ENCODE measurements at regions of chr9 and their contacts with region 1.

Region 1: DNA sequence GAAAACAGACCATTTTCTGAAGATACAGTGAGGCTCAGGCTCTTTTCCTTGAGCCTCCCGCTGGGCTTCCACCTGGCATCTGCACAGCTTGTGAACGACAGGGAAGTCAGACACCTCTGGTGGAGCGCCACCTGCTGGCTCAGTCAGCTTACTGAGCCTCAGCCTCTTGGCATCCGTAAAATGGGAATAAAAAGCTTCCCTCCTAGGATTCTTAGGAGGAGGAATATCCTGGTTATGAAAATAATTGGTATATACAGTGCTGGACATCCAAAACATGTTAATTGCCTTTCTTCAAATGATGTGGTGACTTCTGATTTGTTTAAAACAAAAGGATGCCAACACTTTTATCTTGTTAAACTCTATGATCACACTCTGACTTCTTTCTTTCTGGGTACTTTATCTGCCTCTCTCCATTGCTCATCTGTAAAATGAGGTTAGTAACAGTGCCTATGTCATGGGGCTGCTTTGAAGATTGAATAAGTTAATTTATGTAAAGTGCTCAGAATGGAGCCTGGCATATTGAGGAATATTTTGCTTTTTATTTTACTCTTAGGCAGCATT is 67.5 kb downstream of the MAMDC2 start:
- DNase-seq: peak; percentile 81
- H3K4me3 ChIP-seq: no peak overlapping the region
- H3K27ac ChIP-seq: peak overlapping the region; percentile 9 to 72 (median 51)
- H3K4me1 ChIP-seq: peaks cover 0 to 24% (median 6%) of the 10 kb centered on the region in 4 donors
- H3K27me3 ChIP-seq: no peaks in the 10 kb centered on the region
- CTCF ChIP-seq: peak; percentile 68 to 91 (median 82)
- EP300 ChIP-seq: no peak
- POLR2A ChIP-seq: no peak

Region 2: DNA sequence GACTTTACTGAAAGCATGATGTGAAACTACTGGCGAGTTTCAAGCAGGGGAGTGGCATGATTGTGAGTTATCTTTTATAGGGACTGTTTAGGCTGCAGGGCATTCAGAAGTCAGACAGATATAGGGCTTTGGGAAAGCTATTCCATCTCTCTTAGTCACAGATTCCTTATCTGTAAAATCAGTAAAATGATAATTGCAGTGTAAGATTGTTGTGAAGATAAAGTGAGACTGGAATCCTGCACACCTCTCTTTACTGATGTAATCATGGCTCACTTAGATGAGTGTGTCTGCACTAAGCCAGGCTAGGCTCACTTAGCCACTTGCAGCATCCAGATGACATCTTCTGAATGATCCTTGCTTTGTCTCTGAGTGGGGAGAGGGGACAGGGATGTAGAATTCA is 149.3 kb before region 1 on chr9:
- in situ Hi-C with region 1: loop called (anchors 5 to 10 kb)
- intact Hi-C with region 1: no loop called
- DNase-seq: no peak
- H3K4me3 ChIP-seq: no peak overlapping the region
- H3K27ac ChIP-seq: no peak overlapping the region
- H3K4me1 ChIP-seq: no peaks in the 10 kb centered on the region
- H3K27me3 ChIP-seq: no peaks in the 10 kb centered on the region
- CTCF ChIP-seq: no peak
- EP300 ChIP-seq: no peak
- POLR2A ChIP-seq: no peak

Region 3: DNA sequence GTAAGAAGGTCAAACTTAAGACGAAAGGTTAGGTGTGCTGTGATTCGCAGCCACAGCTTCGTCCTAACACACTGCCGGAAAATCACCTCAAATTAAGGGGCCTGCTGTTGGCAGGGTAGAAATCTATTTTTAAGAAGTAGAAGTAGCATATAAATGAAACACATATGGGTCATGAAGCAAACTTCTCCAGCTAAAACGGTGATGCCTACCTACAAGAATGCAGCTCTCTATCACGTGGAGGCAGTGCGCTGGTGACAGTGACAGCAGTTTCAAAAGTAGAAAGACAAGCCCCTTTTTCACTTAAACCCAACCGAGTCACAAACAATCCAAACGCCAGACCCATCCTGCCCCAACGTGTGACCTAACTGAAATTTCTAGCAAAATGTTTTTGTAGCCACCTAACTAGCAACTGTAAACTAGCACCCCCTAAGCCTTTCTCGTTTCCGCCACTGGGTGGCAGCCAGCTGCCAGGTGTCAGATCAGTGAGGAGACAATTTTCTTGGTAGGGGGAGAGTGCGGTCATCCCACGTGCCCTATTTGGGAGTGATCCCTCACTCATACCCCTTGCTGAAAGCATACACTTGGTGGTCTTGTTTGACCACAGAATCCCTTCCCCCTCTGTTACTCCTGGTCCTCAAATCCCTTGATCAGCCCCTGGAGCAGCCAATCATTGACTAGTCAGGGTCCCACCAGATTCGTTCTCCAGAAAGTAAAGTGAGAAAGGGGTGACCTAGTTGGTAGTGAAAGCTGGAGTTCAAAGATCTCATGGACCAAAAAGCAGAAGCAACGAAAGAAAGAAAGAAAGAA is 139.3 kb before region 1 on chr9:
- in situ Hi-C with region 1: loop called (anchors 5 to 10 kb)
- intact Hi-C with region 1: loop called (anchors 2 kb)
- DNase-seq: peak; percentile 67
- H3K4me3 ChIP-seq: no peak overlapping the region
- H3K27ac ChIP-seq: no peak overlapping the region
- H3K4me1 ChIP-seq: no peaks in the 10 kb centered on the region
- H3K27me3 ChIP-seq: no peaks in the 10 kb centered on the region
- CTCF ChIP-seq: peak; percentile 73 to 90 (median 82)
- EP300 ChIP-seq: no peak
- POLR2A ChIP-seq: no peak

Region 4: DNA sequence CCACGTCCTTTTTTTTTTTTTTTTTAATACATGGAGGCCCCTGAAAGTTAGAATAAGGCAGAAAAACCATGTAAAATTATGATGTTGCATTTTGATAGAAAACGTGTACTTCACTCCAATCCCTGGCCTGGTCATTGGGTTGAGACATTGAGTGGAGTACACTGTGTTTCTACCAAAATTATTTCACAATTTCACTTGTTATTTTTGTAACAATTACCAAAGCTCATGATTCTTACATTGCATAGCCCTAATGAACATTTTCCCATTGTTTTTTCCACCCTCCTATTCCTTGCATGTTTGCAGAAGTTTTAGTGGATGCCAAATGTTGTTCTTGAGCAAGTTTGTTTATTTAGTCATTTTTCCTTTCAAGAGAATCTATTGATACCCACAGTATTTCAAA is 45.5 kb before region 1 on chr9:
- in situ Hi-C with region 1: no loop called
- intact Hi-C with region 1: no loop called
- DNase-seq: no peak
- H3K4me3 ChIP-seq: no peak overlapping the region
- H3K27ac ChIP-seq: peak overlapping the region; percentile 77 to 90 (median 83)
- H3K4me1 ChIP-seq: peaks cover 5 to 48% (median 14%) of the 10 kb centered on the region in 4 donors
- H3K27me3 ChIP-seq: no peaks in the 10 kb centered on the region
- CTCF ChIP-seq: no peak
- EP300 ChIP-seq: no peak
- POLR2A ChIP-seq: no peak

Region 5: DNA sequence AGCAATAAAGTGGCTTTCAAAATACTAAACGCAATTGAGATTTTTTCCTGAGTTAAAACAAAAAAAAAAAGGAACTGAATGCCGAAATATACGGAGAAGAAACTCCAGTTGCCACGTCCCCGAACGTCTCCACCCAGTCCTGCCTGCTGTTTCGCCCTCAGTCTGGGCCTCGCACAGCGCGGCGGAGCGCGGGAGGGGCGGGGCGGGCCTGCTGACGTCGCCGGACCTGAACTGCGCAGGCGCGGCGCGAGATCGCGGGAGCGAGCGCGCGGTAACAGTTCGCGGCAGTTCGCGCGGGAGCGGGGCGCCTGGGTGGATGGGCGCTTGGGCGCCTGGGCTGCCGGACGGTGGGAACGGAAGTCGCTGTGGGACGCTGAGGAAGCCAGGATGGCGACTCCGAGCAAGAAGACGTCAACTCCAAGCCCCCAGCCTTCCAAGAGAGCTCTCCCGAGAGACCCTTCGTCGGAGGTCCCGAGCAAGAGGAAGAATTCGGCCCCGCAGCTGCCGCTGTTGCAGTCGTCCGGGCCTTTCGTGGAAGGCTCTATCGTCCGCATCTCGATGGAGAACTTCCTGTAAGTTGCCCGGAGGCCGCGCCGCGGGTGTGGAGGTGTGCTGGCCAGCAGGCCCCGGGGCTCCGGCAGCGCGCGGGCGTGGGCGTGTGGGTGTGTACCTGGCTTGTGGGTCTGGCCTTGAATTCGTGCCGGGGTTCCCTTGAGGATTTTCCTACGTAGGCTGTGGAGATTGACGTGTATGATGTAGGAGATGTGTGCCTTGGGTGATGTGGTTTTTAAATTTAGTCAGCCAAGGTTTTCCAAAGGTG is 147.8 kb after region 1 on chr9 and contains the start of gene SMC5:
- in situ Hi-C with region 1: no loop called
- intact Hi-C with region 1: loop called (anchors 10 kb)
- DNase-seq: peak; percentile 93
- H3K4me3 ChIP-seq: peak within 1 kb of the TSS; percentile 72 to 85 (median 81)
- H3K27ac ChIP-seq: peak within 1 kb of the TSS; percentile 96 to 99 (median 96)
- H3K4me1 ChIP-seq: peaks cover 11 to 68% (median 52%) of the 10 kb centered on the region in 4 donors
- H3K27me3 ChIP-seq: no peaks in the 10 kb centered on the region
- CTCF ChIP-seq: peak in 1 of 5 experiments; percentile 3
- EP300 ChIP-seq: no peak
- POLR2A ChIP-seq: peak; percentile 97
- total RNA-seq, gene SMC5: 20.2 to 86.1 (median 24.0) TPM

Measured in transverse colon (tissue), 4 donors.